ENCODE measurements at regions of chr22 and their contacts with region 1.

Region 1: DNA sequence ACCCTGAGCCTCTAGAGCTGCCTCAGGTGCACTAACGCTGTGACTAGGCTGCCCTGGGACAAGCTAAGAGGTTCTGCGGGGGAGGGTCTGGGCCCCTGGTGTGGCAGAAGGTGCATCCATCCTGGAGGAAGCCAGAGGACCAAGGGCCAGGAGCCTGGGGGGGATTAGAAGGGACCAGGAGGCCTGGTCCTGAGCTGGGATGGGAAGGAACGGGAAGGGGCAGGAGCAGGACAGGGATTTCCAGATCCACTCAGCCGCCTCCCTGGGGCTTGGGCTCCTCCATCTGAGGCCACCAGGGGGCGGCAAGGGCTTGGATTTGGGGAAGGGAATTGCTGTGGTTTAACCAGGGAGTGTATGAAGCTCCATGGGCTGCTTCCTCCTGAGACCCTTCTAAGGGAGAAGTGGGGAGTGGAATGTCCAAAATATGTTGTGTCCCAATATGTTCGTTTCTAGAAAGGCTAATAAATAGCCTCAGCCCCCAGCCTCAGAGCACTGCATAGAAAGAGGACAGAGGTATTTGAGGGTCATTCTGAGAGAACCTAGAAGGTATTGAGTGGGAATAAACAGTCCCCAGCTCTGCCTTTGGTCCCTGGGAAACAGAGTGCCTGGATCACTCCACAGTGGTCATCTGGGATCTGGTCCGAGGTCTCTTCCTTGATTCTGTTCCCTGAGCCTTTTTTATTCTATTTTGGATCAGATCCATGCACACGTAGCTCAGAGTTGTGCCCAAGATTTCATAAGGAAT is 17.4 kb upstream of the PRAME start:
- DNase-seq: peak; percentile 56
- ATAC-seq: peak; percentile 49
- H3K4me3 ChIP-seq: no peak overlapping the region
- H3K4me3 Mint-ChIP-seq: no peak overlapping the region
- H3K27ac ChIP-seq: no peak overlapping the region
- H3K27ac Mint-ChIP-seq: no peak overlapping the region
- H3K4me1 ChIP-seq: peaks cover 0 to 15% of the 10 kb centered on the region in 2 donors
- H3K4me1 Mint-ChIP-seq: peaks cover 10% of the 10 kb centered on the region
- H3K27me3 ChIP-seq: peaks cover 0 to 2% (median 0%) of the 10 kb centered on the region in 4 experiments
- H3K27me3 Mint-ChIP-seq: peaks cover 8% of the 10 kb centered on the region
- CTCF ChIP-seq: peak; percentile 84

Region 2: DNA sequence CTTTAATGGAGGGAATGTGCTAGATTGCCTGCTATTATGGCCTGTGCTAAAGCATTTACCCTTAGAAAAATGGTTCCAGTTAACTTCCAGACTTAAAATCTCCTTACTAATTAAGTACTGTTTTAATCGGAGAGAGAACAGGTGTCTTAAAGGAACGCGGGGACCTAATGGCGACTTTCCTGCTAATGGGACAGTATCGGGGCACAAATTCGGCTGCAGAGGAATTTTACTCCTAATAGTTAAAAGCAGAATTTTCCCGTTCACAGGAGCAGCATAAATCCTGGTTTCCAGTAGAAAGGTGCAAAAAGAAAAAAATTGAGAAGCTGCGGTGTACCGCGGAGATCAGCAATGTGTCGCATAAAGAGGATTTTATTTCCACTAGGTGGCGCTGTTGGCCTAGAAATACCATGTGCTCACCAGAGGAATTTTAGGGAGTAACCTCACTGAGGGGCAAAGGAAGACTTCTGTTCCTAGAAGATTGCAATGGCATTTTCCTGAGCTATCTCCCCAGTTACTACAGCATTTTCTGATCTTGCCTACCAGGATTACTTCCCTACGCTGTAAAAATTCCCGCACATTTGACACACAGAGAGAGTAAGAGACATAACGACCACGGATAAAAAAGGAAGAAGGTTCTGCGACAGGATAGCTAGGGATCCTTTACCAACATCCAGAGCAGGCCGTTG is 112.4 kb before region 1 on chr22:
- CTCF ChIA-PET with region 1: no interaction called
- POLR2A ChIA-PET with region 1: no interaction called
- intact Hi-C with region 1: no loop called
- DNase-seq: peak; percentile 84
- ATAC-seq: peak; percentile 47
- H3K4me3 ChIP-seq: peak overlapping the region in 1 of 5 experiments; percentile 46
- H3K4me3 Mint-ChIP-seq: no peak overlapping the region
- H3K27ac ChIP-seq: no peak overlapping the region
- H3K27ac Mint-ChIP-seq: peak overlapping the region; percentile 16
- H3K4me1 ChIP-seq: peaks cover 13 to 15% of the 10 kb centered on the region in 2 donors
- H3K4me1 Mint-ChIP-seq: peaks cover 19% of the 10 kb centered on the region
- H3K27me3 ChIP-seq: no peaks in the 10 kb centered on the region
- H3K27me3 Mint-ChIP-seq: peaks cover 3% of the 10 kb centered on the region
- CTCF ChIP-seq: peak; percentile 88

Region 3: DNA sequence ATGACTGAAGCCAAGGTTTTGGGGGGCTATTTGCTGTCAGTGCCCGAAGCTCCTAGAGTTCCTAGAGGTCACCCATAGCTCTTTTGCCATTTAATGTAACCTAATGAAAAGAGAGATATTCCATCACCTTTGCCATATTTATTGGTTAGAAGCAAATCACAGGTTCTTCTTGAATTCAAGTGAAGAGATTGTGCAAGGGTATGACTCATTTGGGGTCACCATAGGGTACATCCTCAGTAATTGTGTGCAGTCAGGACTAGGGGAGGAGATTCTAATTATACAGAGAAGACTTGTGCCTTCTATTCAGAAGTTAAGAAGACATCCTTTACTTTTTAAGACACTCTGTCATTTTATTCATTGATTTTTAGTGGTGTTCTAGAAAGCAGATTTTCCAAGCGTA is 10.4 kb before region 1 on chr22:
- CTCF ChIA-PET with region 1: interaction called, 10 read pairs
- POLR2A ChIA-PET with region 1: no interaction called
- intact Hi-C with region 1: no loop called
- DNase-seq: no peak
- ATAC-seq: no peak
- H3K4me3 ChIP-seq: no peak overlapping the region
- H3K4me3 Mint-ChIP-seq: no peak overlapping the region
- H3K27ac ChIP-seq: no peak overlapping the region
- H3K27ac Mint-ChIP-seq: no peak overlapping the region
- H3K4me1 ChIP-seq: no peaks in the 10 kb centered on the region
- H3K4me1 Mint-ChIP-seq: no peaks in the 10 kb centered on the region
- H3K27me3 ChIP-seq: peaks cover 0 to 8% (median 4%) of the 10 kb centered on the region in 4 experiments
- H3K27me3 Mint-ChIP-seq: peaks cover 25% of the 10 kb centered on the region
- CTCF ChIP-seq: no peak

Region 4: GRCh38 chr22:22593964-22594656 is 17.7 kb after region 1 on chr22:
- CTCF ChIA-PET with region 1: interaction called, 41 read pairs
- POLR2A ChIA-PET with region 1: no interaction called
- intact Hi-C with region 1: no loop called
- DNase-seq: peak; percentile 80
- ATAC-seq: peak; percentile 74
- H3K4me3 ChIP-seq: no peak overlapping the region
- H3K4me3 Mint-ChIP-seq: no peak overlapping the region
- H3K27ac ChIP-seq: no peak overlapping the region
- H3K27ac Mint-ChIP-seq: peak overlapping the region; percentile 82
- H3K4me1 ChIP-seq: peaks cover 10 to 11% of the 10 kb centered on the region in 2 donors
- H3K4me1 Mint-ChIP-seq: peaks cover 26% of the 10 kb centered on the region
- H3K27me3 ChIP-seq: no peaks in the 10 kb centered on the region
- H3K27me3 Mint-ChIP-seq: no peaks in the 10 kb centered on the region
- CTCF ChIP-seq: peak; percentile 81